ENCODE measurements at regions of chr4 and their contacts with region 1.

Region 1: GRCh38 chr4:89871211-89871610 is 23.4 kb upstream of the MMRN1 start:
- H3K4me3 Mint-ChIP-seq: no peak overlapping the region
- H3K27ac Mint-ChIP-seq: no peak overlapping the region
- H3K4me1 Mint-ChIP-seq: no peaks in the 10 kb centered on the region
- H3K27me3 Mint-ChIP-seq: no peaks in the 10 kb centered on the region

Region 2: DNA sequence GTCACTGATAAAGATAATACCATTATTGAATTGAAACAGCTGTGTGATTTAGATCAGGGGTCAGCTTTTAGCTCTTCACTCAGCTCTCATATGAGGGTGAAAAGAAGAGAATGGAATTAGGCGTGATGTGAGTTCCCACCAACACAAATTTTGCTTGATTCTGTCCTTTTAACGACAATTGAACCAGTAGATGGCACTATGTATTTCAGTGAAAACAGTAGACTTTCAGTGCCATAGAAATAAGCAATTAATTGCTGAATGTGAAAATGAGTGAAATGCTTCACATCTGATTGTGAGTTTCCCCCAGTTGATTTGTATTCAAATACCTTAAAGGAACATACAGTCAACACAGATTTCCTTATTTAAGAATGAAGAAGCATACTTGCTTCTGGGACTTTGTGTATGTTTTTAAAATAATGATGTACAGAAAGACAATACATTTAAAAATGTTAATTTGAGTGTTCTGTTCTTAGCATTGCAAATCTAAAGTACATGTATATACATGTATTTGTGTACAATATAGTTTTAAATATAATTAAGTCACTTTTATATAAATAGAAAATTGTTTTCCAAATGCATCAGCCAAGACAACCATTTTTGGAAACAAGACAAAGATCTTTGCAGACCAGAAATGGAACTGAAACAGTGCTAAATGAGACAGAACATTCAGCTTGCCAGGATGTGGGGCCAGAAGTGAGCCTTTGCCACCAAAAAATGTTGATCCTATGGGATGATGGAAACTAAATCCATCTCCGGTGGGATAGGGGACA is 213.1 kb before region 1 on chr4:
- intact Hi-C with region 1: loop called (anchors 5 kb)
- H3K4me3 Mint-ChIP-seq: no peak overlapping the region
- H3K27ac Mint-ChIP-seq: no peak overlapping the region
- H3K4me1 Mint-ChIP-seq: peaks cover 4% of the 10 kb centered on the region
- H3K27me3 Mint-ChIP-seq: no peaks in the 10 kb centered on the region